Heart right ventricle (tissue), 16 donors: ENCODE measurements at regions of chr9 and their contacts with region 1.

Region 1: GRCh38 chr9:5450359-5451091 is at the start of gene CD274:
- DNase-seq: peak; percentile 88 to 90
- ATAC-seq: peak; percentile 97 to 99 (median 99)
- H3K4me3 ChIP-seq: peak within 1 kb of the TSS; percentile 29 to 80 (median 64)
- H3K27ac ChIP-seq: peak within 1 kb of the TSS; percentile 38 to 91 (median 87)
- H3K4me1 ChIP-seq: peaks cover 3 to 76% (median 28%) of the 10 kb centered on the region in 9 donors
- H3K27me3 ChIP-seq: no peaks in the 10 kb centered on the region
- CTCF ChIP-seq: peak; percentile 57 to 90 (median 68)
- total RNA-seq, gene CD274: 11.3 to 44.0 (median 13.5) TPM

Region 2: DNA sequence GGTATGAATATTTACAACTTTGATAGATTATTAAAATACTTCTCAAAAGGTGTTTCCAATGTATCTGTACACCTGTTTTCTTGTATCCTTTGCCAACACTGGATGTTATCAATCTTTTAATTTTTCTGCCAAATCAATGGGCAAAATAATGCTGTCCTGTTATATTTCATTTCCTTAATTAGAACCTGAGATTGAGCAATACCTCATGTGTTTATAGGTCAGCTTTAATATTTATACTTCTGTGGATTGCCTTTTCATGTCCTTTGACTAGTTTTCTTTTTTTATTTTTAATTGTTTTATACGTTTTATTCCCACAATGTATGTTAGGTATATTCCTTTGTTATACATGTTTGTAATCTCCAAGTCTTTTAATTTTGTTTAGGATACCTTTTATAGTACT is 387.9 kb before region 1 on chr9:
- intact Hi-C with region 1: no loop called
- DNase-seq: no peak
- ATAC-seq: no peak
- H3K4me3 ChIP-seq: no peak overlapping the region
- H3K27ac ChIP-seq: no peak overlapping the region
- H3K4me1 ChIP-seq: peaks cover 0 to 18% (median 0%) of the 10 kb centered on the region in 9 donors
- H3K27me3 ChIP-seq: no peaks in the 10 kb centered on the region
- CTCF ChIP-seq: no peak

Region 3: DNA sequence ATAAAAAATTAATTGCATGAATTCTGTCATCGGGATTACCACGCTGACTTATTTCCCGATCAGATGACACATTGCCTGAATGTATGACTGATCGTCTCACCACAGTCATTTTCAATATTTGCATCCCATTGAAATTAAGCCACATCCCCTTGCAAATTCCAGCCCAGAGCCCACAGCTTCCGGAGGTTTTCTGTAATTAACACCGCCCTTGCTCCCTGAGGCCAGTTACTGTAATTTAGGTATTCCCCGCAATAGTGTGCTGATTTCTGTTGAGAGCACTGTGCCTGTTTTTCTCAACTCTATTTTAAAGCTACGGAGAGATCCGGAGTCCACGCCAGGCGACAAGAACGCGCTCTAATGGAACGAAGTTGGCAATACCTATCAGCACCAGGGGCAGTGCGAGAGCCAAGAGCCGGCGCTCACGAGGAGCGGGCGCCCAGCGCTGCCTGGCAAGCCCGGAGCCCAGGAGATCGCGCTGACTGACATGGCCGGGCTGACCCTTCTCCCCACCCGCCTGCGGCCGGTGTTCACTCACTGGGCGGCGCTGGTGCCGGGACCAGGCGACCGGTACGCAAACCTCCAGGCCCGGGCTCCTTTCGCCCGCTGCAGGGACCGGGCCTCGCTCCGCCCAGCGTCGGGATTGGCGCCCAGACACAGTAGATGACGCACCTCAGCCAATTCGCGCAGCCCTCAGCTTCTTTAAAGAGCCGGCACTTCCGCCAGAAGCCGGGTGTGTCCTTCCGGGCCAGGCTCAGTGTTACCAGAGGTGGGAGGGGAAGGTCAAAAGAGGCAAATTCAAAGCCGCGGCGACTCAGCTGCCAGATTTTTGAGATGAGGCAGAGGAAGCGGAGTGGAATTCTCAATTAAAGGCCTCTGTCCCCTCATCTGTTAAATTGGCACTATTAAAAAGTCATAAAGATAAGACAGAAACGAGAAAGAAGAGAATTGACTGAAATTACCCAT is 13.0 kb before region 1 on chr9 and contains the start of gene PLGRKT:
- intact Hi-C with region 1: loop called in 1 of 10 experiments (anchors 1 kb)
- DNase-seq: peak; percentile 95
- ATAC-seq: peak; percentile 99
- H3K4me3 ChIP-seq: peak within 1 kb of the TSS; percentile 39 to 87 (median 67)
- H3K27ac ChIP-seq: peak within 1 kb of the TSS; percentile 41 to 97 (median 92)
- H3K4me1 ChIP-seq: peaks cover 0 to 26% (median 22%) of the 10 kb centered on the region in 9 donors
- H3K27me3 ChIP-seq: no peaks in the 10 kb centered on the region
- CTCF ChIP-seq: peak in 6 of 9 donors; percentile 10 to 53 (median 33)
- total RNA-seq, gene PLGRKT: 30.1 to 53.0 (median 36.3) TPM

Region 4: GRCh38 chr9:5479994-5480694 is 29.6 kb after region 1 on chr9:
- intact Hi-C with region 1: no loop called
- DNase-seq: no peak
- ATAC-seq: no peak
- H3K4me3 ChIP-seq: no peak overlapping the region
- H3K27ac ChIP-seq: no peak overlapping the region
- H3K4me1 ChIP-seq: no peaks in the 10 kb centered on the region
- H3K27me3 ChIP-seq: no peaks in the 10 kb centered on the region
- CTCF ChIP-seq: no peak

Region 5: DNA sequence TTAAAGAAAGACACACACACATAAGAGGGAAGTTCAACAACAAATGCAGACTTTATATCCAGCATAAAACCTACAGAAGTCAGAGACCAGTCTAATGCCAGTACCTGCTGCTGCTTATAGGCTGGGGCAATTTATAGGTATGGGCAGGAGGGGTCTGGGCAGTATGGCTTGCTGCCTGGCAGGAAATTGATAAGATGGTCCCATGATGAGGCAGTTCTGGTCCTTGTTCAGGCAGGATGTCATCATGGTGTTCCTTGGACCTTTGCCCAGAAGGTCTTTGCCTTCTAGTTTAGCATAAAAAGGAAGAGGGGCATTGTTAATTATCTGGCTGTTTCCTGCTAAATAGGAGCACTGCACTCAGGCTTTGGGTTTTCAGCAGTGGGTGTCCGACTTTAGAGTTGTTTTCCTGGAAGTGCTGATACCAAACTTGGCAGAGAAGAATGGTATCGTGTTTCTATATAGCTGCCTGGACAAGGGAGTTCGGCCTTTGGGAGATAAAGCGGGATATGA is 49.4 kb after region 1 on chr9:
- intact Hi-C with region 1: loop called in 5 of 10 experiments (anchors 2 to 5 kb)
- DNase-seq: peak in 1 of 2 donors; percentile 70
- ATAC-seq: peak; percentile 14 to 78 (median 69)
- H3K4me3 ChIP-seq: no peak overlapping the region
- H3K27ac ChIP-seq: peak overlapping the region; percentile 71 to 90 (median 82)
- H3K4me1 ChIP-seq: peaks cover 7 to 36% (median 29%) of the 10 kb centered on the region in 9 donors
- H3K27me3 ChIP-seq: no peaks in the 10 kb centered on the region
- CTCF ChIP-seq: no peak

Region 6: GRCh38 chr9:5510360-5510931 is 59.9 kb after region 1 on chr9 and contains the start of gene PDCD1LG2:
- intact Hi-C with region 1: loop called in 2 of 10 experiments (anchors 5 to 10 kb)
- DNase-seq: no peak
- ATAC-seq: peak in 7 of 8 donors; percentile 28 to 75 (median 59)
- H3K4me3 ChIP-seq: peak within 1 kb of the TSS in 9 of 10 donors; percentile 0 to 51 (median 47)
- H3K27ac ChIP-seq: peak within 1 kb of the TSS; percentile 24 to 85 (median 74)
- H3K4me1 ChIP-seq: peaks cover 0 to 68% (median 40%) of the 10 kb centered on the region in 9 donors
- H3K27me3 ChIP-seq: no peaks in the 10 kb centered on the region
- CTCF ChIP-seq: no peak
- total RNA-seq, gene PDCD1LG2: 0.72 to 8.6 (median 1.3) TPM

Region 7: DNA sequence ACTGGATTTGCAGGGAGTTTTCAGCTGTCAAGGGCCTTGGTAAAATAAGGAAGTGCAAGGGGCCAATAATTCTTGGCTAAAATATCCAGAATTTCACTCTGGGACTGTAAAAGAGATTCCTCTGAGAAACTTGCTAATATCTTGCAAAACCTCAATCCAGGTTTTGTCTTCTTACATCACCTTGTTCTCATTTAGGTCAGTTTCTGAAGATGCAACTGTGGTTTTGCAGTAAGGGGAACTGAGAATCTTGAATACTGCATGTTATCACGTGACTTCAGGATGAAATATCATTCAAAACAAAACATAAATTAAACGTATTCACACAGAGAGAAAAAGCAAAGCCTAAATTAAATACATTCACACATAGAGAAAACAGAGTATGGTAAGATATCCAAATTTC is 143.4 kb after region 1 on chr9:
- intact Hi-C with region 1: loop called (anchors 1 to 5 kb)
- DNase-seq: no peak
- ATAC-seq: no peak
- H3K4me3 ChIP-seq: no peak overlapping the region
- H3K27ac ChIP-seq: no peak overlapping the region
- H3K4me1 ChIP-seq: peaks cover 0 to 20% (median 4%) of the 10 kb centered on the region in 9 donors
- H3K27me3 ChIP-seq: no peaks in the 10 kb centered on the region
- CTCF ChIP-seq: no peak